Activated CD8-positive, alpha-beta memory T cell treated with anti-CD3 and anti-CD28 coated beads, Interleukin-2, amount 10 ng/mL, durations not matched to agents 7 days and 5 days (primary cell): ENCODE measurements at regions of chr12 and their contacts with region 1.

Region 1: GRCh38 chr12:55738123-55739024 is 4.5 kb upstream of the GDF11 start:
- DNase-seq: peak; percentile 93
- ATAC-seq: peak; percentile 75
- H3K4me3 Mint-ChIP-seq: peak overlapping the region; percentile 80
- H3K27ac Mint-ChIP-seq: peak overlapping the region; percentile 88
- H3K4me1 Mint-ChIP-seq: peaks cover 31% of the 10 kb centered on the region
- H3K27me3 Mint-ChIP-seq: peaks cover 8% of the 10 kb centered on the region

Region 2: GRCh38 chr12:55451693-55452092 is 286.7 kb before region 1 on chr12:
- CTCF ChIA-PET with region 1: no interaction called
- DNase-seq: no peak
- ATAC-seq: no peak
- H3K4me3 Mint-ChIP-seq: no peak overlapping the region
- H3K27ac Mint-ChIP-seq: no peak overlapping the region
- H3K4me1 Mint-ChIP-seq: no peaks in the 10 kb centered on the region
- H3K27me3 Mint-ChIP-seq: peaks cover 13% of the 10 kb centered on the region

Region 3: GRCh38 chr12:55629058-55629841 is 109.1 kb before region 1 on chr12:
- CTCF ChIA-PET with region 1: no interaction called
- DNase-seq: no peak
- ATAC-seq: peak; percentile 51
- H3K4me3 Mint-ChIP-seq: no peak overlapping the region
- H3K27ac Mint-ChIP-seq: peak overlapping the region; percentile 0
- H3K4me1 Mint-ChIP-seq: peaks cover 17% of the 10 kb centered on the region
- H3K27me3 Mint-ChIP-seq: peaks cover under 1% of the 10 kb centered on the region

Region 4: DNA sequence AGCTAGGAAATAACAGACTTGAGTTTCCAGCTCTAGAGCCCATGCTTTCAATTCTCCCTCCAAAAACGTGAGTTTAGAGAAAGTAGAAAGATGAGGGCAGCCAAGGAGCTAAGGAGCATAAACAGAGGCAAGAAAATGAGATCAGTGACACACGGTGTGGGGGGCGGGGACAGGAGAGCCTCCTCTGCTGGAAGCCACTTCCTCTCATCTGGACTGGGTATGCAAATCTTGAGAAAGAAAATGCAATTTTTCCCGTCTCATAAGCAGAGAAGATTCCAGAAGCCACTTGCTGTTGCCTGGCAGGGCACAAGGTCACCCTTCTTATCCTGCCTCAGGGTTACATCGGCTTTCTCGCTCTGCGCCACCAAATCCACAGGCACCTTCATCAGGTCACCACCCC is 95.7 kb before region 1 on chr12:
- CTCF ChIA-PET with region 1: interaction called, 11 read pairs
- DNase-seq: peak; percentile 61
- ATAC-seq: no peak
- H3K4me3 Mint-ChIP-seq: no peak overlapping the region
- H3K27ac Mint-ChIP-seq: no peak overlapping the region
- H3K4me1 Mint-ChIP-seq: peaks cover 31% of the 10 kb centered on the region
- H3K27me3 Mint-ChIP-seq: no peaks in the 10 kb centered on the region

Region 5: DNA sequence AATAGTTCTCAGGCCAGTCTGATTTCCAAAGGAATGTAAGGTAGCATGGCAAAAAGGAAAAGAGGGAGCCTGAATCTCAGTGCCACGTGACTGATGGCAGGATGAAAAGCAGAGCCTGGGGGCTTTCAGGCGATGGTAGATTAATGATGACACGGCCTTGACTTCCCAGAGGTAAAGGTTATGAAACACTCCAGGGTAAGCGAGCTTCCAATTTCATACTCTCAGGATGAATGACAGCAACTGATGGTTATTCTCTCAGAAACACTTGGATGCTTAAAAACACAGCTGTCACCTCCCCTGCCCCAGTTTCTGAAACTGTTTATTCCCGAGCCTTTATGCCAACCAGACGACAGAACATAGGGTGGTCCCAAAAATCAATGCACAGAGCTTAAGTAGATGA is 33.4 kb after region 1 on chr12:
- CTCF ChIA-PET with region 1: interaction called, 13 read pairs
- DNase-seq: no peak
- ATAC-seq: no peak
- H3K4me3 Mint-ChIP-seq: no peak overlapping the region
- H3K27ac Mint-ChIP-seq: peak overlapping the region; percentile 8
- H3K4me1 Mint-ChIP-seq: peaks cover 11% of the 10 kb centered on the region
- H3K27me3 Mint-ChIP-seq: no peaks in the 10 kb centered on the region

Region 6: DNA sequence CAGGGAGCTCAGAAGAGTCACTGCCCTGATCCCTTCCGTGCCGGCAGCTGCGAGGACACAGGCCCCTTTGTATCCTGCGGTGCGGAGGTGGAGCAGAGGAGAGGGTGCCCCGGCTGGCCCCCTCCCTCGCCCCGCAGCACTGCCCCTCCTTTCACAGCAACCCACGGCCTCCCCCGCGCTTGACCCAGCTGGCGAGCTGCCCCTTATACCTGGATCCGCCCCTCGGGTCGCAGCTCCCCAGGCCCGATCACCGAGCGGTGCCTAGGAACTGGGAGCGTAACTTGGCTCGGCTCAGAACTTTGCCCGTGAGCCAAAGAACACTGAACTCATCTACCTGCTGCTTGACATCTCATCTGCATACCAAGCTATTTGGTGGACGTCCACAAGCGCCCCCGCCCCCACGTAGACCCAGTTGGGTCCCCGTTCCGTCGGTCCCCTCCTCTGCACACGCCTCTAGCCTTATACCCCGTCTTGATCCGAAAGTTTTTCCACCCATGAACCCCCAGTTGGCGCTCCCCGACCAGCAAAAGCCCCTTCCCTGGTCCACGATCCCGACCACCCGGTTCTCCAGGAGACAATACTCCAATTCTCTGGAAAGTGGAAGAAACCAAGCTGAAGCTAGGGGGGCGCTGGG is 91.7 kb after region 1 on chr12:
- CTCF ChIA-PET with region 1: interaction called, 12 read pairs
- DNase-seq: peak; percentile 67
- ATAC-seq: peak; percentile 24
- H3K4me3 Mint-ChIP-seq: peak overlapping the region; percentile 97
- H3K27ac Mint-ChIP-seq: peak overlapping the region; percentile 93
- H3K4me1 Mint-ChIP-seq: peaks cover 44% of the 10 kb centered on the region
- H3K27me3 Mint-ChIP-seq: no peaks in the 10 kb centered on the region

Region 7: DNA sequence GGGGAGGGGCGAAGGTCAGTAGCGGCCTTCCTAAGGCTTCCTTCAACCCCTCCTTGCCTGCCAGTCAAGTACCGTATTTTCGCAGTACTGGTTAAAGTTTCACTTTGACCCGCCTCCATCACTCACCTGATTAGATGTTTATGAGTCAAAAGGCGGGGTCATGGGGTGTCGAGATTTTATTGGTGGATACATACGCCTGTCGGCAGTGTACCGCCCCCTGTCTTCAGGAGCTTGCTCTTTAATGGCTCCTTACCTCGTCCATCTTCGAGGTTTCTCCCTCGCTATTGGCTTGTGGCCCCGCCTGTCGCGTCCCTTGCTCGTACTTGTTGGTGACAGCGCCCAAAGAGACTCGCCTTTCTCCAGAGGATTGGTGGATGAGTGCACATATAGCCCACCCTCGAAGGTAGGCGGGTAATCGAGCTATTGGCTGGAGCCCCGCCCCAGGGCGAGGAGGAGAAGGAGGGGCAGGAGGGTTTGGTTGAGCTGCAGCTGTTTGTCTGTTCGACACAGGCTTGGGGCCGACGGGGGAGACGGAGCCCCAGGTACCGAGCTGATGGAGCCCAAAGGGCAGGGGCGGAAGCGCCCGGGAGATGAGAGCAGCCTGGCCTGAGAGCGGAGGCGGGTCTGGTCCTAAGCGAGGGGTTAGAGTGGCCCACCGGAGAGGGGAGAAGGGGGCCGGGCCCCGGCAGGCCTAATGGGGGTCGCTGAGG is 235.4 kb after region 1 on chr12 and contains the start of gene RAB5B:
- CTCF ChIA-PET with region 1: interaction called, 18 read pairs
- DNase-seq: peak; percentile 100
- ATAC-seq: peak; percentile 93
- H3K4me3 Mint-ChIP-seq: no peak within 1 kb of the TSS
- H3K27ac Mint-ChIP-seq: no peak within 1 kb of the TSS
- H3K4me1 Mint-ChIP-seq: peaks cover 29% of the 10 kb centered on the region
- H3K27me3 Mint-ChIP-seq: no peaks in the 10 kb centered on the region
- total RNA-seq, gene RAB5B: 46.4 to 55.6 TPM

Region 8: GRCh38 chr12:56041552-56042429 is 303.4 kb after region 1 on chr12 and contains the start of gene RPS26:
- CTCF ChIA-PET with region 1: interaction called, 16 read pairs
- DNase-seq: peak; percentile 97
- ATAC-seq: peak; percentile 91
- H3K4me3 Mint-ChIP-seq: peak within 1 kb of the TSS; percentile 93
- H3K27ac Mint-ChIP-seq: peak within 1 kb of the TSS; percentile 97
- H3K4me1 Mint-ChIP-seq: peaks cover 53% of the 10 kb centered on the region
- H3K27me3 Mint-ChIP-seq: no peaks in the 10 kb centered on the region
- total RNA-seq, gene RPS26: 27.9 to 42.2 TPM